Caki2 (cell line): ENCODE measurements at regions of chr1 and their contacts with region 1.

Region 1: DNA sequence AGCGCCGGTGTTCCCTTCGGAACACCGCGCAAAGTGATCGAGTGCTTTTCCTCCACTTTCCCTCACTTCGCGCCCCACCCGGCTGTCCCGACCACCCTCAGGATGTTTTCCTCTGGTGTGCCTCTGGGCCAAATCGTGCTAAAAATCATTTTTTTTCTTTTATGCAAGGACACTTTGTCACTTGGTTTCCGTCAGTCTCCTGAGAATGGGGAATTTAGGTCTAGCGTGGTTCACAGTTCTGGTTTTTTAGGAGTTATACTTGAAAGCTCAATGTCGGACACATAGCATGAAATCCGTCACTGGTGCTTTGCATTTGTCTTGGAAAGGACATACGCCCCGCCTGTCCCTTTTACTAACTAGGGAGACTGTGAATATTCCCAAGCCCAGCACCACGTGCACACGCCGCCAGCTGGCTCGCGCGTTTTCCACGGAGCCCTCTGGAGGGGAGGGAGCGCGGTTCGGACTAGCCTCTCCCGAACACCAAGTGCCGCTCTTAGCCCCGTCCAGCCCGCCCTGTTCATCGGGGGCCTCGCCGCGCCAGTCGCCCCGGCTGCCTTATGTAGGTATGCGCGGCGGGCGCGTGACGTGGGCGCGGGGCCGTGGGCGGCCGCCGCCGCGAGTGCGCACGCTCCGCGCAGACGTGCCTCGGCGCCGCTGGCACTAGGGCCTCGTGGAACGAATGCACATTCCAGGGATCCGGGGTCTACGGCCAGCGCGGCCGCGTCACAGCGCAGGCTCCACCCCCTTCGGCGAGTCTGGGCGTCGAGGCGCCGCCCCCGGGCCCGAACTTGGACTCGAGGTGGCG is 572 bp upstream of the IRF2BP2 start:
- DNase-seq: peak; percentile 94

Region 2: GRCh38 chr1:234699795-234700665 is 89.5 kb after region 1 on chr1:
- in situ Hi-C with region 1: loop called (anchors 10 kb)
- DNase-seq: peak; percentile 97

Region 3: DNA sequence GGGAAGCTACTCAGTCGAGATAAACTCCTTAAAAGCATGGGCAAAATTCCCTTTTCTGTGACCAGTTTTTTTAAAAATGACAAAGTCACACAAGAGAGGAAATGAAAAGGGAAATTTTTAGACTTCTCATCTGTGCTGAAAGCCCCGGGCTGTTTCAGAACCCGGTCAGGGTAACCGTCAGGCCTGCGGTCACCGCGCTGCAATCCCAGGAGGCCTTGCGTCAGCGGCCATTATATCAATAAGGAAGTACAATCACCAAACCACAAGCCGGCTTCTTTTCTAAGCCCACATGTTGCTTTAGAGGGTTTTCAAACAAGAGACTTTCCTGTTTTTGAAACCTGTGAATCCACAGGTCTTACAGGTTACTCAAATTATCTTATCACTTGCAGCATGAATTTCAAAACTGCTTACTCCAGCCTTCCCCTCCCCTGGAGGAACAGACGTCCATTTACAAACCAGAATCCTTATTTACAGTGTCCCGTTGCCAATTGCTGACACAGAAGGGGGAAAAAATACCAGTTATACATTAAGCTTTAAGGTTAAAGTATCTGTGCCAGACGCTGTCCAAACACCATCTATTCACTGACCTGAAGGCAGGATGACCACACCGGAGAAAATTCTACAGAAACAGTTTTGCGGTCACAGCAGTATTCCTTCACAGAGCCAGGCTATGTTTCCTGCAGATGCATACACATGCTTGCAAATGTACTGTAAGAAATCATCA is 352.8 kb after region 1 on chr1:
- in situ Hi-C with region 1: loop called (anchors 25 kb)
- DNase-seq: peak; percentile 96

Region 4: GRCh38 chr1:235075188-235075926 is 464.8 kb after region 1 on chr1:
- in situ Hi-C with region 1: loop called (anchors 25 kb)
- DNase-seq: peak; percentile 63